Right lobe of liver (tissue), 6 donors: ENCODE measurements at regions of chr17 and their contacts with region 1.

Region 1: DNA sequence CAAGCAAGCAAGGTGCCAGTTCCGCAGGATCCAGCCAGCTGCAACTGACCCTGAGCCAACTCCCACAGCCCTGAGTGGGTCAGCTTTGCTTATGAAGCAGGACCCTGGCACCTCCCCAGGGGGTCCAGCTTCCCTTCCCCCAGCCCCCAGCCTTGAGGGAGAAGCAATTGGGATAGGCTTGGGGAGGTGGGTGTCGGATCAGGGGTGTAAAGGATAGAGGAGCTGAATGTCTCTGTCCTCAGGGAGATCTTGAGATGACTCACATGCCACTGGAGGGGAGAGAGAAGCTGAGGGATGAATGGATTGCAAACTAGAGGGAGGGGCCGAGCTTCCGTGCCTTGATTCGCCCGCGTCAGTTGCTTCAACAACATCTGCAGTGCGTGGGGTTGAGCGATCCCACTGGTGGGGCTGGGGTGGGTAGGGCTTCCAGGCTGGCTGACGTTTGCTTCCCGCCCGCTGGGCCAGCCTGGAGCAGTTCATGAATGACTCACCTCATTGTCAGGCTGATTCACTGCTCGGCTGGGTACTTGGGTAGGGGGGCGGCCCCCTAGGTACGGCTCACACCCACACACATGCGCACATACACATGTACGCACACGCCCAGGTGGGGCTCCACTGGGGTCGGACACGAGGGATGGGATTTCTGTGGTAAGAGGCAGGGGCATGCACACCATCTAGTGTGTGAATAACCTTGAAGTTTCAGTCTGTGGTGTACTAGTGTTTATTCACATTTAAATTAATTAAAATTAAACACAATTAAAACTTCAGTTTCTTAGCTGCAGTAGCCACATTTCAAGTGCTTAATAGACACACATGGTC is 3.6 kb upstream of the HROB start:
- DNase-seq: peak in 1 of 3 donors; percentile 73
- ATAC-seq: peak in 3 of 4 donors; percentile 5 to 82 (median 5)
- H3K4me3 ChIP-seq: no peak overlapping the region
- H3K27ac ChIP-seq: no peak overlapping the region
- H3K4me1 ChIP-seq: peaks cover 0 to 10% (median 3%) of the 10 kb centered on the region in 4 donors
- H3K27me3 ChIP-seq: no peaks in the 10 kb centered on the region
- CTCF ChIP-seq: no peak
- POLR2A ChIP-seq: no peak

Region 2: DNA sequence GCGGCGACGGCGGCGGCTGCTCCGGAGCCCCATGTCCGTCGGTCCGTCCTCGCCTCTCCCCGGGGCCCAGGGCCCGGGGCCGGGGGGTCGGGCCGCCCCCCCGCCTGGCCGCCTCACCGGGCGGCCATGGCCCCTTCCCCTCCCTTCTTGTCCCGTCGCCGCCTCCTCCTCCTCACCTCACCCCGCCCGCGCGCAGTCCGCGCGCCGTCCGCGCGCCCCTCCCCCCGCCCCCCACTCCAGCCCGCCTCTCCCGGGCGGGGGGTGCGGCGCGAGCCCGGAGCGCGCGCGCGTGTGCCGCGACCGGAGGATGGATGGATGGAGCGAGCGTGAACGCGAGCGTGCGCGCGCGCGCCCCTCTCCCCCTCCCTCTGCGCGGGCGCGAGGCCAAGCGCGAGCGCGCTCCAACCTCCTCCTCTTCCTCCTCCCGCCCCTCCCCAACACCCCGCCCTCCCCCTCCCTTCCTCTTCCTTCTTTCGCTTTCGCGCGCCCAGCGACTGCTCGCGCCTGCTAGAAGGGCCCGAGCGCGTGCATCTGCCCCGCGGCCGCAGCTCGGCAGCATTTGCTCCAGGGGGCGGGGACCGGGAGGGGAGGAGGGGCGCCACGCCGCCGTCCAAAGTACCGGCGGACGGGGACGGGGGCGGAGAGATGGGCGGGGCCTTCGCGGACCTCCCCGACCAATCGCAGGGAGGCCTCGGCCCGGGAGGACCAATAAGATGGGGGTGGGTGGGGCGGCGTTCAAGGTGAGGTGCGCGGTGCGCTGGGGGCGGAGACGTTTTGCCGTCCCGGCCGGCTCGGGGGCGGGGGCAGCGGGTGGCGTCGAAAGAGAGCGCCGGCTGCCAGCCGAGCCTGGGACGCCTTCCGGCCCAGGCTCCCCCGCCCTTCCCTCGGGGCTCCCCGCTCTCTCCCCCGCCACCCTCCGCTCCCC is 61.7 kb after region 1 on chr17 and contains the start of gene ATXN7L3:
- intact Hi-C with region 1: loop called in 1 of 2 experiments (anchors 10 kb)
- DNase-seq: peak; percentile 99
- ATAC-seq: peak; percentile 90 to 95 (median 93)
- H3K4me3 ChIP-seq: peak within 1 kb of the TSS; percentile 79 to 96 (median 83)
- H3K27ac ChIP-seq: peak within 1 kb of the TSS; percentile 90 to 96 (median 92)
- H3K4me1 ChIP-seq: peaks cover 0 to 3% (median 0%) of the 10 kb centered on the region in 4 donors
- H3K27me3 ChIP-seq: no peaks in the 10 kb centered on the region
- CTCF ChIP-seq: no peak
- POLR2A ChIP-seq: peak; percentile 39
- total RNA-seq, gene ATXN7L3: 20.3 to 26.8 (median 22.1) TPM

Region 3: GRCh38 chr17:44241106-44241624 is 103.1 kb after region 1 on chr17:
- intact Hi-C with region 1: no loop called
- DNase-seq: no peak
- ATAC-seq: no peak
- H3K4me3 ChIP-seq: no peak overlapping the region
- H3K27ac ChIP-seq: no peak overlapping the region
- H3K4me1 ChIP-seq: no peaks in the 10 kb centered on the region
- H3K27me3 ChIP-seq: no peaks in the 10 kb centered on the region
- CTCF ChIP-seq: no peak
- POLR2A ChIP-seq: no peak